AG04449 (cell line): ENCODE measurements at regions of chr10 and their contacts with region 1.

Region 1: DNA sequence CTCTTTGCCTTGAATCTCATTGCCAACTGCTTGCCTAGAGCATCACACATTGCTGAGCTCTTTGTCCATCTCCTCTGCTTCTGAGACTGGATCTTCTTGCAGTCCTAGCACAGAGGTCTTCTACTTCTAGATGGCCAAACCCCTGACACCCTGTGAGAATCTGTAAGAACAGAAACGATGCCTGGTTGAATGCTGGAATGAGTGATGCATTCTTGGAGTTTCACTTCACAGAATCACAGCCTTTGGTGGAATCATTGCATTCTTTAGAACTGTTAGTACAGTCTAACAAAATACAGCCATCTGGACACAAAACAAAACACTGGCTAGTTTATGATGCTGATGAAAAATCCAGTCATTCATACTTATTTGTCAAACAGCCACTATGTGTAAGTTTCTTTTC is 141.7 kb upstream of the ITGB1 start:
- DNase-seq: peak; percentile 61
- H3K4me3 ChIP-seq: no peak overlapping the region
- CTCF ChIP-seq: no peak

Region 2: GRCh38 chr10:33115738-33116719 is 16.3 kb after region 1 on chr10:
- CTCF ChIA-PET with region 1: interaction called, 11 read pairs
- POLR2A ChIA-PET with region 1: interaction called, 4 read pairs
- DNase-seq: no peak
- H3K4me3 ChIP-seq: no peak overlapping the region
- CTCF ChIP-seq: peak; percentile 52